GM12878 (cell line): ENCODE measurements at regions of chr14 and their contacts with region 1.

Region 1: DNA sequence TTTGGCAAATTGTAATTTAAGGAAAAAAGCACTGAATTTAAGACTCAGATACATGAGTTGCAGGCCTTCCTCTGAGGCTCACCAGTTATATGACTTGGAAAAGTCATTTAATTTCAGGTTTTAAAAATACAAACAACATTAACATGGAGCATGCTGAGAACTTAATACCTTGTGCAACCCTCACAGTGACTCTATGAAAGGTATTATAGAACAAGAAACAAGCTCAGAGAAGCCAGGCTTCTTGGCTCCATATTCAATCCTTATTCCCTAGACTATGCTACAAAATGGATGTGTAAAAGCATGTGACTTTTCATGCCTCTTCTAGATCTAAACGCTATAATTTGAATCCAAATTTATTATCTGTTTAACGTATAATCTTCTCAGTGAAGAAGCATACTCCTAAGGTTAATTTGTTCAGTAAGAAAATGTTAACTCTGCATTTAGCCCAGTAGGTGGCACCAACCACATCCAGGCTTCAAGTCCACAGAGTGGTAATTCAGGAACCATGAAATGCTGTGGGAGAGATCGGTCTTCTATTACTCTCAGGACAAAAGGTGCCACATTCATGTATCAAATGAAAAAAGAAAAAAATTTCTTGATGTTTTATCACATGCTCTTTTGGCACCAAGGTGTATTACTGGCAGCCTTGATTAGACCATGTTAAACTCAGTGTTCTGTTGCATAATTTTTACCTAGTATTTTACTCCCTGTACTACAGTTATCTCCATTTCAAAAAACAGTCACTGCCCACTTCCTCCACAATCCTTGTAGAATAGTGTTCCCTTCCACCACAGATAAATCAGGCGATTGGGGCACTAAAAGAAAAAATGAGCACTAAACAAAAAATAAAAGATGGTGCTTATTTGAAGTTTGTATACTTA is 9.3 kb downstream of the CCDC196 start:
- DNase-seq: peak; percentile 45
- ATAC-seq: peak; percentile 96
- H3K4me3 ChIP-seq: no peak overlapping the region
- H3K27ac ChIP-seq: no peak overlapping the region
- H3K4me1 ChIP-seq: peaks cover 3% of the 10 kb centered on the region; the same call in 1 of the 2 replicates
- H3K27me3 ChIP-seq: no peaks in the 10 kb centered on the region
- CTCF ChIP-seq: peak; percentile 70 to 84 (median 84)
- EP300 ChIP-seq: no peak
- POLR2A ChIP-seq: no peak
- RAD21 ChIP-seq: peak; percentile 87

Region 2: GRCh38 chr14:66507722-66508546 is 12.5 kb after region 1 on chr14 and contains the start of gene GPHN:
- CTCF ChIA-PET with region 1: interaction called, 25 read pairs
- POLR2A ChIA-PET with region 1: interaction called, 4 read pairs
- RAD21 ChIA-PET with region 1: interaction called, 17 read pairs
- SMC1A ChIA-PET with region 1: interaction called, 33 read pairs
- in situ Hi-C with region 1: no loop called
- intact Hi-C with region 1: no loop called
- DNase-seq: peak; percentile 95
- ATAC-seq: peak; percentile 91
- H3K4me3 ChIP-seq: peak within 1 kb of the TSS; percentile 95
- H3K27ac ChIP-seq: peak within 1 kb of the TSS; percentile 87
- H3K4me1 ChIP-seq: peaks cover 4% of the 10 kb centered on the region
- H3K27me3 ChIP-seq: no peaks in the 10 kb centered on the region
- CTCF ChIP-seq: peak; percentile 15 to 23 (median 20); a peak in 4 of 6 replicates
- EP300 ChIP-seq: 0 out of 4 replicates have a peak, but pooled peaks of 1 of the 2 experiments have one; percentile 13
- POLR2A ChIP-seq: peak; percentile 95
- RAD21 ChIP-seq: no peak
- polyA plus RNA-seq, gene GPHN: 32.3 to 33.1 TPM

Region 3: GRCh38 chr14:66649498-66649897 is 154.0 kb after region 1 on chr14:
- CTCF ChIA-PET with region 1: no interaction called
- POLR2A ChIA-PET with region 1: interaction called, 4 read pairs
- RAD21 ChIA-PET with region 1: interaction called, 15 read pairs
- SMC1A ChIA-PET with region 1: interaction called, 7 read pairs
- in situ Hi-C with region 1: no loop called
- intact Hi-C with region 1: no loop called
- DNase-seq: peak; percentile 79
- ATAC-seq: peak; percentile 82
- H3K4me3 ChIP-seq: peak overlapping the region; percentile 54
- H3K27ac ChIP-seq: peak overlapping the region; percentile 96
- H3K4me1 ChIP-seq: peaks cover 36% of the 10 kb centered on the region
- H3K27me3 ChIP-seq: no peaks in the 10 kb centered on the region
- CTCF ChIP-seq: no peak
- EP300 ChIP-seq: peak; percentile 83 to 90
- POLR2A ChIP-seq: no peak
- RAD21 ChIP-seq: no peak

Region 4: GRCh38 chr14:66746316-66747006 is 251.0 kb after region 1 on chr14:
- CTCF ChIA-PET with region 1: interaction called, 27 read pairs
- POLR2A ChIA-PET with region 1: no interaction called
- RAD21 ChIA-PET with region 1: interaction called, 10 read pairs
- SMC1A ChIA-PET with region 1: interaction called, 4 read pairs
- in situ Hi-C with region 1: no loop called
- intact Hi-C with region 1: loop called (anchors 5 kb)
- DNase-seq: no peak
- ATAC-seq: peak; percentile 80
- H3K4me3 ChIP-seq: no peak overlapping the region
- H3K27ac ChIP-seq: no peak overlapping the region
- H3K4me1 ChIP-seq: no peaks in the 10 kb centered on the region
- H3K27me3 ChIP-seq: no peaks in the 10 kb centered on the region
- CTCF ChIP-seq: peak; percentile 40 to 53 (median 43)
- EP300 ChIP-seq: no peak
- POLR2A ChIP-seq: no peak
- RAD21 ChIP-seq: peak; percentile 59

Region 5: GRCh38 chr14:67137744-67138371 is 642.4 kb after region 1 on chr14:
- CTCF ChIA-PET with region 1: interaction called, 3 read pairs
- POLR2A ChIA-PET with region 1: no interaction called
- RAD21 ChIA-PET with region 1: interaction called, 3 read pairs
- SMC1A ChIA-PET with region 1: interaction called, 3 read pairs
- in situ Hi-C with region 1: no loop called
- intact Hi-C with region 1: loop called (anchors 5 kb)
- DNase-seq: no peak
- ATAC-seq: peak; percentile 56; the same call in 2 of the 3 replicates
- H3K4me3 ChIP-seq: no peak overlapping the region
- H3K27ac ChIP-seq: no peak overlapping the region
- H3K4me1 ChIP-seq: no peaks in the 10 kb centered on the region
- H3K27me3 ChIP-seq: no peaks in the 10 kb centered on the region
- CTCF ChIP-seq: peak; percentile 37 to 42 (median 38); a peak in 3 of 6 replicates
- EP300 ChIP-seq: no peak
- POLR2A ChIP-seq: no peak
- RAD21 ChIP-seq: peak; percentile 56